Natural killer cell (primary cell): ENCODE measurements at regions of chr1 and their contacts with region 1.

Region 1: DNA sequence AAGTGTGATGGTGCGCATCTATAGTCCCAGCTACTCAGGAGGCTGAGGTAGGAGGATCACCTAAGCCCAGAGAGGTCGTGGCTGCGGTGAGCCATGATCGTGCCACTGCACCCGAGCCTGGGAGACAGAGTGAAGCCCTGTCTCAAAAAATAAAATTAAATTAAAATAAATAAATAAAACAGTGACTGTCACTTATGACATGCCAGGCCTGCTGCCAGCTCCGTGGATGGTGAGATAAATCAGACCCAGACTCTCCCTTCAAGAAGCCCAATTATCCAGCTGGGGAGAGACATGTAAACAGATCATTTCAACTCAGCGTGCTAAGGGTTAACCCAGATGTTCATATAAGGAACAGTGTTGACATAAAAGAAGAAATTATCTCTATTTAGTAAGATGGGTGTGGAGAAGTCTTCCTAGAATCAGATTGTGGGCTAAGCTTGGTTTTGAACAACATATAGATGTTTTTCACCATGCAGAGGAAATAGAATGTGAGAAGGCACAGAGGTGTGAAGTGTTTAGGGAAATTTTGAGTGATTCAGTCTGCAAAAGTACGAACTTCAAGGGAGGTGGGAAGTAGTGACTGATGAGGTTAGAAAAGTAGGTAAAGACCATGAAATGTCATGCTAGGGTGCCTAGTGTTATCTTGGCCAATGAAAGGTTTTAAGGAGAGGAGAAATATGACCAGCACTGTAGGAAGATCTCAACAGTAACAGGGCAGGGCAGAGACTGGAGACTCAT is 18.3 kb downstream of the YARS1 start:
- DNase-seq: peak in 1 of 2 donors; percentile 82
- ATAC-seq: peak; percentile 74 to 88 (median 79)
- H3K4me3 ChIP-seq: peak overlapping the region; percentile 4
- H3K4me3 Mint-ChIP-seq: peak overlapping the region; percentile 84
- H3K27ac ChIP-seq: peak overlapping the region; percentile 79
- H3K27ac Mint-ChIP-seq: peak overlapping the region; percentile 90 to 93
- H3K4me1 ChIP-seq: peaks cover 58% of the 10 kb centered on the region
- H3K4me1 Mint-ChIP-seq: peaks cover 46 to 48% of the 10 kb centered on the region in 2 donors
- H3K27me3 ChIP-seq: no peaks in the 10 kb centered on the region
- H3K27me3 Mint-ChIP-seq: no peaks in the 10 kb centered on the region
- CTCF ChIP-seq: no peak

Region 2: GRCh38 chr1:32619701-32620485 is 179.0 kb before region 1 on chr1:
- intact Hi-C with region 1: loop called (anchors 10 kb)
- DNase-seq: no peak
- ATAC-seq: no peak
- H3K4me3 ChIP-seq: no peak overlapping the region
- H3K4me3 Mint-ChIP-seq: no peak overlapping the region
- H3K27ac ChIP-seq: no peak overlapping the region
- H3K27ac Mint-ChIP-seq: no peak overlapping the region
- H3K4me1 ChIP-seq: peaks cover 8% of the 10 kb centered on the region
- H3K4me1 Mint-ChIP-seq: peaks cover 26 to 28% of the 10 kb centered on the region in 2 donors
- H3K27me3 ChIP-seq: no peaks in the 10 kb centered on the region
- H3K27me3 Mint-ChIP-seq: no peaks in the 10 kb centered on the region
- CTCF ChIP-seq: no peak

Region 3: GRCh38 chr1:32817159-32817814 is 18.4 kb after region 1 on chr1 and contains the starts of genes S100PBP and YARS1:
- intact Hi-C with region 1: loop called (anchors 1 kb)
- DNase-seq: peak; percentile 99 to 100
- ATAC-seq: peak; percentile 91 to 99 (median 92)
- H3K4me3 ChIP-seq: peak within 1 kb of the TSS; percentile 82
- H3K4me3 Mint-ChIP-seq: peak within 1 kb of the TSS; percentile 95
- H3K27ac ChIP-seq: peak within 1 kb of the TSS; percentile 81
- H3K27ac Mint-ChIP-seq: peak within 1 kb of the TSS; percentile 82 to 87
- H3K4me1 ChIP-seq: peaks cover 58% of the 10 kb centered on the region
- H3K4me1 Mint-ChIP-seq: peaks cover 62 to 70% of the 10 kb centered on the region in 2 donors
- H3K27me3 ChIP-seq: no peaks in the 10 kb centered on the region
- H3K27me3 Mint-ChIP-seq: no peaks in the 10 kb centered on the region
- CTCF ChIP-seq: no peak
- total RNA-seq, gene S100PBP: 84.5 to 114 (median 85.5) TPM
- total RNA-seq, gene YARS1: 163 to 223 (median 197) TPM

Region 4: DNA sequence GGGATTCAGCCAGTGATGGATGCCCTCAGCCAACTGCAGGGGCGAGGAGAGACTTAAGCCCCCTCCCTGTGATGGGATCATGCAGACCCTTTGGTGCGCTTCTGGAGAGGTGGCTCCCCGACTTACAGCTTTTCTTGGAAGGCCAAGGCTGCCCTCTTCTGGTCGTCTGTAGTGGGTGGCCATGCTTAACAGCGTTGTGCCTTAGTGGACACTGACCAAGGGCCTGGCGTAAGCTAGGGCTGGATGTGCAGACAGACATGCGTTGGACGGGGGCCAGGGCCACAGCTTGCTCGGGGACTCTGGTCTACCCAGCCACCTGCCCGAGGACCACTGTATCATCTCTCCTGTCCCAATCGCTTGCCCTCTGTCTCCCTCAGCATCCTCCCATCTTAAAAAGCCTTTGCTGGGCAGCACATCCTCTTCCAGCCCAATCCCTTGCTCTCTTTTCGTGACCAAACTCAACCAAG is 287.6 kb after region 1 on chr1:
- intact Hi-C with region 1: no loop called
- DNase-seq: peak in 1 of 2 donors; percentile 64
- ATAC-seq: peak; percentile 58 to 72 (median 67)
- H3K4me3 ChIP-seq: no peak overlapping the region
- H3K4me3 Mint-ChIP-seq: no peak overlapping the region
- H3K27ac ChIP-seq: no peak overlapping the region
- H3K27ac Mint-ChIP-seq: no peak overlapping the region
- H3K4me1 ChIP-seq: peaks cover 27% of the 10 kb centered on the region
- H3K4me1 Mint-ChIP-seq: peaks cover 28 to 33% of the 10 kb centered on the region in 2 donors
- H3K27me3 ChIP-seq: no peaks in the 10 kb centered on the region
- H3K27me3 Mint-ChIP-seq: peaks cover 0 to 7% of the 10 kb centered on the region in 2 donors
- CTCF ChIP-seq: peak; percentile 44